CD4-positive, alpha-beta T cell (primary cell): ENCODE measurements at regions of chr2 and their contacts with region 1.

Region 1: GRCh38 chr2:230712443-230713330 is at the start of gene CAB39:
- DNase-seq: peak; percentile 73 to 97 (median 84)
- ATAC-seq: peak; percentile 81
- H3K4me3 ChIP-seq: peak within 1 kb of the TSS; percentile 88
- H3K4me3 Mint-ChIP-seq: peak within 1 kb of the TSS; percentile 93
- H3K27ac ChIP-seq: peak within 1 kb of the TSS; percentile 63 to 84
- H3K27ac Mint-ChIP-seq: peak within 1 kb of the TSS; percentile 94
- H3K4me1 ChIP-seq: peaks cover 31% of the 10 kb centered on the region
- H3K4me1 Mint-ChIP-seq: peaks cover 48% of the 10 kb centered on the region
- H3K27me3 ChIP-seq: no peaks in the 10 kb centered on the region
- H3K27me3 Mint-ChIP-seq: no peaks in the 10 kb centered on the region
- CTCF ChIP-seq: peak; percentile 75
- total RNA-seq, gene CAB39: 44.8 to 45.3 TPM

Region 2: DNA sequence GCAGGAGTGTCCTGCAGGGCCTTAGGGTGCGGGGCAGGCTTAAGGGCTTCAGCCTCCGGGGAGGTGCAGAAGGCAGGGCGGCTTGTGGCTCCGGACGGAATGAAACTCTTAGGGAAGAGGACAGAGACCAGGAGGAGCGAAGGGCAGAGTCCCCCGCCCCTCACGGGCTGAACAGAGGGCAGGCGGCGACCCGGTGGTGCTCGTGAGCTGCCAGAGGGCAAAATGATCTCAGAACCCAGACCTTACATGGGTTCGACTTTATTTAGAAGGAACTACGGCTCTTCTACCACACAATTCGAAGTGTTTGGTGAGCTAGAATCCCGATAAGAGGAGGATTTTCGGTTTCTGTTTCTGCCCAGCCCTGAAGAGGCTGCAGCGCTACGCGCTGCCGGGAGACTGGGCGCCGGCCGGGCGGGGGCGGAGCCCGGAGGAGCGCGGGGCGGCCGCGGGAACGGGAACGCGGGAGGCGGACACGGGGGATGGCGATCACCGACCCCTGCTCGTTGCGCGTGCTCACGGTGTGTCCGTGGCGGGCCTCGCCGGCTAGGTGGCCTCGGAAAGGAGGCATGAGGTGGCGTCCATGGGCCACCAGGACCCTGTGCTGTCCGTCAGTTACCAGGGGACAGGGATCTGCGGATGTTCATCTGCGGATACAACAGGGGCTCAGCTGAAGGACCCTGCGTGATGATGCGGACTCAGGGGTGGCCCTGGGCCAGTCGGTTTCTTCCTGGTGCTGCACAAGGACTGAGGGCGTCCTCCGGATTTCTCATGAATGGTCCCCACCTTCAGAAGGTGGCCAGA is 300.9 kb before region 1 on chr2:
- CTCF ChIA-PET with region 1: interaction called, 4 read pairs
- POLR2A ChIA-PET with region 1: interaction called, 4 read pairs
- intact Hi-C with region 1: loop called (anchors 10 kb)
- DNase-seq: peak in 13 of 14 experiments; percentile 29 to 81 (median 48)
- ATAC-seq: peak; percentile 68
- H3K4me3 ChIP-seq: peak overlapping the region; percentile 92
- H3K4me3 Mint-ChIP-seq: peak overlapping the region; percentile 97
- H3K27ac ChIP-seq: peak overlapping the region; percentile 83 to 89
- H3K27ac Mint-ChIP-seq: peak overlapping the region; percentile 93
- H3K4me1 ChIP-seq: peaks cover 68% of the 10 kb centered on the region
- H3K4me1 Mint-ChIP-seq: peaks cover 95% of the 10 kb centered on the region
- H3K27me3 ChIP-seq: no peaks in the 10 kb centered on the region
- H3K27me3 Mint-ChIP-seq: no peaks in the 10 kb centered on the region
- CTCF ChIP-seq: no peak

Region 3: DNA sequence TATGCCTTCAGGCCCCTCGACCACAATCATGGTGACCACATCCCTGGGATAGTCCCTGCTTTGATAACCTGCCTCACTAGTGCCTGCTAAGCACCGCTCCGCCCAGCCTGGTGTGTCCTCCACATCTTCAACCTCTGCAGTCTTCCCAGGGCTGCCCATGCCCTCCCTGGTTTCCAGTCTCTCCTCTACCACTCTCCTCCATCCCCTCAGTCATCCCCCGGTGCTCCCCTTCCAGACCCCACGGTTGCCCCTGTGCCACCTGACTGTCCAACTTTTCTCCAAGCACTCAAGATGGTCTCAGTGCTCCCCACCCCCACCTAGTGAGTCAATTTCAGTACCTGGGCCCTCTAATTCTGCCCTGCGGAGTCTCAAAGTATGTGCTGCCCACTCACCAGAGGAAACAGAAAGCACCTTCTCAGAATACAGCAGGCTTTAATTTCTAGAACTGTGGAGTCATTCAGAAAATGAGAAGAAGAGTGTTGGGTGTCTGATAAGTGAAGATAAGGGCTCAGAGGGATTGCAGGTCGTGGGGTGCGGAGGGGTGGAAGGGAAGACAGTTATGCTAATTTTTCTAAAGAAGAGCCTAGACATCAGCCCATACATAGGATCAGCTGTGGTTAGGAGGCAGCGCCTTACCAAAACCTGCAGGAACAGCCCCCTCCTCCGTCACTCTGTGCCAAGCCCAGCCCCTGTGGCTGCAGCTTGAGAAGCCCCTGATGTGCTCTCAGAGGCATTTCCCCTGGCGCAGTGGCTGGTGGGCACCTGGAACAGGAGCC is 53.6 kb before region 1 on chr2:
- CTCF ChIA-PET with region 1: no interaction called
- POLR2A ChIA-PET with region 1: interaction called, 36 read pairs
- intact Hi-C with region 1: loop called (anchors 5 kb)
- DNase-seq: peak in 6 of 14 experiments; percentile 16 to 66 (median 37)
- ATAC-seq: peak; percentile 40
- H3K4me3 ChIP-seq: peak overlapping the region; percentile 1
- H3K4me3 Mint-ChIP-seq: peak overlapping the region; percentile 65
- H3K27ac ChIP-seq: peak overlapping the region in 1 of 2 donors; percentile 18
- H3K27ac Mint-ChIP-seq: peak overlapping the region; percentile 90
- H3K4me1 ChIP-seq: peaks cover 87% of the 10 kb centered on the region
- H3K4me1 Mint-ChIP-seq: peaks cover 92% of the 10 kb centered on the region
- H3K27me3 ChIP-seq: no peaks in the 10 kb centered on the region
- H3K27me3 Mint-ChIP-seq: no peaks in the 10 kb centered on the region
- CTCF ChIP-seq: no peak

Region 4: DNA sequence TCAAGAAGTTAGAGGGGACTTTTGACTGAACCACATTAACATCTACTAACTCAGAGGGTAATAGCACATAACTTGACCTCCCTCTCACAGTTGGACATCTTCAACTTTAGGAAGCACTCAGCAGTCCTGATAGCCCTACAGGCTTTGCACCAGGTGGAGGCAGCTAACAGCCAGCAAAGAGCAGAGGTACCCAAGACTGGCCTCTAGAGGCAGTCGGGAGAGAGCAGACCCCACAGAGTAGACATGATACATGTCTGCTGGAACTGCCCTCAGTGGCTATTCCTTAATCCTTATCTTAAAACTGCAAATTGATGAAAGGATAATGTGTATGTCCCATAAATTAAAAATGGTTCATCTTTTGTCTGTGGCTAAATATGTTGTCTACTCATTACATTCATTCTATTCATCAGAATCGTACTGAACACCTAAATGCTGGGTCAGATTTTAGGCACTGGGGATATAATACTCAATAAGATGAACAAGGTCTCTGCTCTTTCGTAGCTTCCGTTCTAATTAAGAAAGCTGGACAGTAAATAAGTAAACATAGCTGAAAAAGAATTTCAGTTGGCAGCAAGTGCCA is 49.7 kb after region 1 on chr2:
- CTCF ChIA-PET with region 1: interaction called, 8 read pairs
- POLR2A ChIA-PET with region 1: interaction called, 6 read pairs
- intact Hi-C with region 1: loop called (anchors 5 kb)
- DNase-seq: peak in 10 of 14 experiments; percentile 7 to 61 (median 34)
- ATAC-seq: peak; percentile 92
- H3K4me3 ChIP-seq: no peak overlapping the region
- H3K4me3 Mint-ChIP-seq: no peak overlapping the region
- H3K27ac ChIP-seq: no peak overlapping the region
- H3K27ac Mint-ChIP-seq: peak overlapping the region; percentile 30
- H3K4me1 ChIP-seq: peaks cover 25% of the 10 kb centered on the region
- H3K4me1 Mint-ChIP-seq: peaks cover 77% of the 10 kb centered on the region
- H3K27me3 ChIP-seq: no peaks in the 10 kb centered on the region
- H3K27me3 Mint-ChIP-seq: no peaks in the 10 kb centered on the region
- CTCF ChIP-seq: peak; percentile 56

Region 5: GRCh38 chr2:230781130-230781797 is 68.6 kb after region 1 on chr2:
- CTCF ChIA-PET with region 1: interaction called, 4 read pairs
- POLR2A ChIA-PET with region 1: interaction called, 10 read pairs
- intact Hi-C with region 1: no loop called
- DNase-seq: peak in 13 of 14 experiments; percentile 14 to 90 (median 38)
- ATAC-seq: peak; percentile 97
- H3K4me3 ChIP-seq: no peak overlapping the region
- H3K4me3 Mint-ChIP-seq: peak overlapping the region; percentile 16
- H3K27ac ChIP-seq: no peak overlapping the region
- H3K27ac Mint-ChIP-seq: peak overlapping the region; percentile 80
- H3K4me1 ChIP-seq: peaks cover 41% of the 10 kb centered on the region
- H3K4me1 Mint-ChIP-seq: peaks cover 79% of the 10 kb centered on the region
- H3K27me3 ChIP-seq: no peaks in the 10 kb centered on the region
- H3K27me3 Mint-ChIP-seq: no peaks in the 10 kb centered on the region
- CTCF ChIP-seq: no peak

Region 6: DNA sequence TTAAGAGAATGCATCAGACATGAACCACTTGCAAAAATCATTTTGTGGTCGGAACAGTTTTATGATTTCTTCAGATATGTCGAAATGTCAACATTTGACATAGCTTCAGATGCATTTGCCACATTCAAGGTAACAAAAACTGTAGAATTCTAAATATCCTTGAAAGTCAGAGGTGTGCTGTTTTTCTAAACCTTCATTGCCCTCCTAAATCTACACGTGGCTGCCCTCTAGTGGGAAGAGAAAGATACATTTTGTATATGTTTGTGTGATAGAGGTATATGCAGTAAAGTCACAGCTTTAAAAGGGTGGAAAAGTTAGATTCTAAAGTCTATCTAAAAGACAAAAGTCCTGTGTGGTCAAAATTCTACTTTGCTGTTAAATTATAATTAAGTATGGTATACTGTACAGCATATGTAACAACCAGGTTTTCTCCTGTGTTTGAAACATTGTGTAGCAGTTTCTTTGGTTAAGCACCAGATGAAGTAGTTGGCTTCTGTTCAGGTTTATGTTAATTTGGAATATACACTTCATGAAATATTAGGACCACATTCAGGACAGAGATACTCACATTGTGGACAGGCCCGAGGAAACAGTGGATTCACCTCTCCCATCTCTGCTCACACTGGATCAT is 86.2 kb after region 1 on chr2:
- CTCF ChIA-PET with region 1: interaction called, 47 read pairs
- POLR2A ChIA-PET with region 1: interaction called, 30 read pairs
- intact Hi-C with region 1: loop called (anchors 1 kb)
- DNase-seq: peak in 11 of 14 experiments; percentile 15 to 79 (median 40)
- ATAC-seq: peak; percentile 39
- H3K4me3 ChIP-seq: no peak overlapping the region
- H3K4me3 Mint-ChIP-seq: no peak overlapping the region
- H3K27ac ChIP-seq: no peak overlapping the region
- H3K27ac Mint-ChIP-seq: peak overlapping the region; percentile 82
- H3K4me1 ChIP-seq: peaks cover 35% of the 10 kb centered on the region
- H3K4me1 Mint-ChIP-seq: peaks cover 16% of the 10 kb centered on the region
- H3K27me3 ChIP-seq: no peaks in the 10 kb centered on the region
- H3K27me3 Mint-ChIP-seq: no peaks in the 10 kb centered on the region
- CTCF ChIP-seq: peak; percentile 82

Region 7: GRCh38 chr2:232162186-232162585 is 1449.5 kb after region 1 on chr2:
- CTCF ChIA-PET with region 1: no interaction called
- POLR2A ChIA-PET with region 1: no interaction called
- intact Hi-C with region 1: no loop called
- DNase-seq: no peak
- ATAC-seq: no peak
- H3K4me3 ChIP-seq: no peak overlapping the region
- H3K4me3 Mint-ChIP-seq: no peak overlapping the region
- H3K27ac ChIP-seq: no peak overlapping the region
- H3K27ac Mint-ChIP-seq: no peak overlapping the region
- H3K4me1 ChIP-seq: no peaks in the 10 kb centered on the region
- H3K4me1 Mint-ChIP-seq: no peaks in the 10 kb centered on the region
- H3K27me3 ChIP-seq: no peaks in the 10 kb centered on the region
- H3K27me3 Mint-ChIP-seq: no peaks in the 10 kb centered on the region
- CTCF ChIP-seq: no peak